Activated CD4-positive, alpha-beta T cell treated with anti-CD3 and anti-CD28 coated beads for 36 hours (primary cell): ENCODE measurements at regions of chr7 and their contacts with region 1.

Region 1: DNA sequence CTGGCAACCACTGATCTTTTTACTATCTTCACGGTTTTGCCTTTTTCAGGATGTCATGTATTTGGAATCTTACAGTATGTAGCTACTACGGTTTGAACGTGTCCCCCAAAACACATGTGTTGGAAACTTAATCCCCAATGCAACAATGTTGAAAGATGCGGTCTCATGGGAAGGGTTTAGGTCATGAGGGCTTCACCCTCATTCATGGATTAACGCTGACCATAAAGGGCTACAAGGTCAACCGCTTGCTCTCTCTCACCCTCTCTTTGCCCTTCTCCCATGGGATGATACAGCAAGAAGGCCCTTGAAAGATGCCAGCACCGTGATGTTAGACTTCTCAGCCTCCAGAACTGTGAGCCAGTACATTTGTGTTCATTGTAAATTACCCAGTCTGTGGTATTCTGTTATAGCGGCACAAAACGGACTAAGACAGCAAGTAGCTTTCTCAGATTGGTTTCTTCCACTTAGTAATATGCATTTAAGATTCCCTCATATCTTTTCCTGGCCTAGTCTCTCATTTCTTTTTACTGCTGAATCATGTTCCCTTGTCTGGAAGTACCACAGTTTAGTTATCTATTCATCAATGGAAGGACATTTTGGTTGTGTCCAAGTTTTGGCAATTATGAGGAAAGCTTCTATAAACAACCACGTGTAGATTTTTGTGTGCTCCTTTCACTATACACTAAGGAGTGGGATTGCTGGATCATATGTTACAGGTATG is 3.0 kb upstream of the CRYGN start:
- DNase-seq: no peak
- ATAC-seq: no peak
- H3K4me3 Mint-ChIP-seq: no peak overlapping the region
- H3K27ac Mint-ChIP-seq: no peak overlapping the region
- H3K4me1 Mint-ChIP-seq: peaks cover 43% of the 10 kb centered on the region
- H3K27me3 Mint-ChIP-seq: no peaks in the 10 kb centered on the region

Region 2: DNA sequence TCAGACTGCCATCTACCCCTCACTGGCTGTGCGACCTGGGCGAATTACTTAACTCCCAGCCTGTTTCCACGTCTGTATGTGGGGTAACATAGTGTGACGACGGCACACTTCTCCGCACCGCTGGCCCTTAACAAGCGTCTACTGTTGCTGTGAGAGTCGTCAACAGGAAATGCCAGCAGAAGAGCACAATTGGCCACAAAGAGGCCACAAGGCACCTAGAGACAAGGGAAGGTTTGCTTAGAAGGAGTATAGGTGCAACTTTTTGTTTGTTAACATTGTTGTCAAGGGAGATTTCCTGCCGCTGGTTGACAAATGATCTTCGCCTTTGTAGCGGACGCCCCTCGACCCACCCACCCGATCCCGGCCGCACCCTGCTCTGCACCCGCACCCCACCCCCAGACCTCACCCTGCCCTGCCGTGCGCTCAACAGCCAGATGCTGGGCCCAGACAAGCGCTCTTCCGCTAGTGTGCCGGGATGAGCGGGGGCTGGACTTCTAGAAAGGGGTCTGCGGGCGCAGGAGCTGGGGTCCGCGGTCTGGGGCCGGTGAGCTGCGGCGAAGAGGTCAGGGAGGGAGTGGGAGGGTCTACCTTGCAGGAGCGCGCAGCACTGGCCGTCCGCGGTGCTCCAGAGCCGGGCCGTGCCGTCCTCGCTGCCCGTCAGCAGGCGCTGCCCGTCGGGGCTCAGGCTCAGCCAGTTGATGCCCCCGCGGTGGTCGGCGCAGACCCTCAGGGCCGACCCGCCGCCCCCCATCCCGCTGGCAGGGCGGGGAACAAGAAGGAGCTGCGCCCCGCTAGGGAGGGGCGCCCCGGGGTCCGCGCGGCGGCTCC is 33.9 kb before region 1 on chr7:
- CTCF ChIA-PET with region 1: interaction called, 13 read pairs
- POLR2A ChIA-PET with region 1: no interaction called
- intact Hi-C with region 1: loop called (anchors 1 to 5 kb)
- DNase-seq: peak; percentile 47
- ATAC-seq: peak; percentile 47
- H3K4me3 Mint-ChIP-seq: peak overlapping the region; percentile 49
- H3K27ac Mint-ChIP-seq: peak overlapping the region; percentile 5
- H3K4me1 Mint-ChIP-seq: peaks cover 31% of the 10 kb centered on the region
- H3K27me3 Mint-ChIP-seq: peaks cover 36% of the 10 kb centered on the region

Region 3: GRCh38 chr7:151648429-151648828 is 205.5 kb after region 1 on chr7:
- CTCF ChIA-PET with region 1: no interaction called
- POLR2A ChIA-PET with region 1: no interaction called
- intact Hi-C with region 1: no loop called
- DNase-seq: no peak
- ATAC-seq: no peak
- H3K4me3 Mint-ChIP-seq: no peak overlapping the region
- H3K27ac Mint-ChIP-seq: no peak overlapping the region
- H3K4me1 Mint-ChIP-seq: no peaks in the 10 kb centered on the region
- H3K27me3 Mint-ChIP-seq: no peaks in the 10 kb centered on the region